ENCODE measurements at regions of chr9 and their contacts with region 1.

Region 1: DNA sequence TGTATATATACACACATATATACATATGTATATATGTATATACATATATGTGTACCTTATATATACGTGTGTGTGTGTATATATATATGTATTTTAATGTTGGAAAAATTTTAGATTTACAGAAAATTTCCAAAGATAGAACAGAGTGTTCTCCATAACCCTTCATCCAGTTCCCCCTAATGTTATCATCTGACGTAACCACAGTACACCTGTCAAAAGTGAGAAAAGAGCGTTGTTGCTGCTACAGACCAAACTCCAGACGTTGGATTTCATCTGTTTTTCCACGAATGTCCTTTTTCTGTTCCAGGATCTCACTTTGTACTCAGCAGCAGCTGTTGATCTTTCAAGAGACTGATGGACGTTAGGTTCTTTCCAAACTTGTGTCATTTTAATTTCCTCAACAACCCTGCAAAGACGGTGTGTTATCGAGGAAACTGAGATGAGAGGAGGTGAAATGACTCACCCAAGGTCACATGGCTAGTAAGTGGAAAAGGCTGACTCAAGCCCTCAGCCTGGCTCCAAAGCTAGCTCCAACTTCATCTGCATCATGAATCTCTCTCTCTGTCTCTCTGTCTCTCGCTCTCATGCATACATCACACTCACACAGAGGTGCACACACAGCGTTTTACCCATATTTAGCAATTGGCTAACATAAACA is 17.0 kb upstream of the NTNG2 start:
- DNase-seq: no peak
- H3K4me3 Mint-ChIP-seq: peak overlapping the region; percentile 22
- H3K27ac Mint-ChIP-seq: peak overlapping the region; percentile 73
- H3K4me1 Mint-ChIP-seq: peaks cover 25% of the 10 kb centered on the region
- H3K27me3 Mint-ChIP-seq: peaks cover 44% of the 10 kb centered on the region

Region 2: GRCh38 chr9:131845305-131846298 is 299.2 kb before region 1 on chr9:
- intact Hi-C with region 1: loop called (anchors 5 kb)
- DNase-seq: no peak
- H3K4me3 Mint-ChIP-seq: no peak overlapping the region
- H3K27ac Mint-ChIP-seq: peak overlapping the region; percentile 77
- H3K4me1 Mint-ChIP-seq: peaks cover 16% of the 10 kb centered on the region
- H3K27me3 Mint-ChIP-seq: peaks cover 3% of the 10 kb centered on the region

Region 3: GRCh38 chr9:132006677-132007370 is 138.0 kb before region 1 on chr9:
- intact Hi-C with region 1: loop called (anchors 1 kb)
- DNase-seq: peak; percentile 33
- H3K4me3 Mint-ChIP-seq: no peak overlapping the region
- H3K27ac Mint-ChIP-seq: no peak overlapping the region
- H3K4me1 Mint-ChIP-seq: peaks cover 36% of the 10 kb centered on the region
- H3K27me3 Mint-ChIP-seq: no peaks in the 10 kb centered on the region

Region 4: GRCh38 chr9:132160802-132161742 is 16.2 kb after region 1 on chr9:
- intact Hi-C with region 1: loop called (anchors 1 kb)
- DNase-seq: peak; percentile 60
- H3K4me3 Mint-ChIP-seq: peak overlapping the region; percentile 93
- H3K27ac Mint-ChIP-seq: peak overlapping the region; percentile 87
- H3K4me1 Mint-ChIP-seq: peaks cover 16% of the 10 kb centered on the region
- H3K27me3 Mint-ChIP-seq: peaks cover 51% of the 10 kb centered on the region

Region 5: DNA sequence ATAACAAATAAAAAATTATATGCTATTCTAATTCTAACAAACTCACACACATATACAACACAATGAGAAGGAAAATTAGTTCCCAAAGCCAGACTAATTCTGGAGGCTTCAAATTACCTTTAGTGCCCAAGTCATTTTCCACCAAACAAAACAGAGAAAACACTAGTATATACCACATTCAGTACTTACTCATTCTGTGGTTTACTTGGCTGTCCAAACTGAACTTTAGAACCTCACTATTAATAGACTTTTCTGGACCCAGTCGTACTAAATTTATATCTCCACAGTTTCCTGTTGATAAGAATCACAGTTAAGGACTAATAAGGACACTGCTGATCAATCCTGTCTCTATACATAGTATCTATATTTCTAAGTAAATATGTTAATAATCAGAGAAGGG is 143.5 kb after region 1 on chr9:
- intact Hi-C with region 1: no loop called
- DNase-seq: no peak
- H3K4me3 Mint-ChIP-seq: no peak overlapping the region
- H3K27ac Mint-ChIP-seq: peak overlapping the region; percentile 42
- H3K4me1 Mint-ChIP-seq: peaks cover 15% of the 10 kb centered on the region
- H3K27me3 Mint-ChIP-seq: no peaks in the 10 kb centered on the region

Measured in activated T-helper 2 cell treated with anti-CD3 and anti-CD28 coated beads, Interferon-gamma antibody, Interleukin-2, Interleukin-4, amounts not matched to agents 10 μg/mL and 5 μg/mL and 100 μg/mL, durations not matched to agents 14 hours and 24 hours and 36 hours (primary cell).